ENCODE measurements at regions of chr1 and their contacts with region 1.

Region 1: DNA sequence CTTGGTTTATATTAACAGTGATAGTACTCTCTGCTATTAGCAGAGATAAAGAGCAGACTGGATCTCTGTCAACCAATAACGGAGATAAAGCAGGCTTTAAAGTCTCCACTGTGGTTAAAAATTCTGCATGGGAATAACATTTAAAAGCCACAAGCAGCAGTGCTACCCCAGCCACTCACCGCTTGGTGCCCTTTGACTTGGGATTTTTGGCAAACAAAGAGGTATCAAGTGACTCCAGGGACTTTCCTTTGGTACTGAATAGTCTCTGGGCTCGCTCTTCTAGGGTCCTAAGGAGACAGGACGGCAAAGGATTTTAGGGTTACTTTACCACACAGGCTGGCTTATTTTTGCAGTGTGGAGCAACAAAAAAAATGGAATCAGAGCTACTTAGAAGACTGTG is 11.3 kb downstream of the SF3A3 start:
- DNase-seq: no peak
- ATAC-seq: no peak
- H3K4me3 ChIP-seq: no peak overlapping the region
- H3K27ac ChIP-seq: no peak overlapping the region
- H3K4me1 ChIP-seq: no peaks in the 10 kb centered on the region
- H3K27me3 ChIP-seq: no peaks in the 10 kb centered on the region
- CTCF ChIP-seq: no peak
- EP300 ChIP-seq: no peak
- POLR2A ChIP-seq: no peak
- RAD21 ChIP-seq: no peak

Region 2: DNA sequence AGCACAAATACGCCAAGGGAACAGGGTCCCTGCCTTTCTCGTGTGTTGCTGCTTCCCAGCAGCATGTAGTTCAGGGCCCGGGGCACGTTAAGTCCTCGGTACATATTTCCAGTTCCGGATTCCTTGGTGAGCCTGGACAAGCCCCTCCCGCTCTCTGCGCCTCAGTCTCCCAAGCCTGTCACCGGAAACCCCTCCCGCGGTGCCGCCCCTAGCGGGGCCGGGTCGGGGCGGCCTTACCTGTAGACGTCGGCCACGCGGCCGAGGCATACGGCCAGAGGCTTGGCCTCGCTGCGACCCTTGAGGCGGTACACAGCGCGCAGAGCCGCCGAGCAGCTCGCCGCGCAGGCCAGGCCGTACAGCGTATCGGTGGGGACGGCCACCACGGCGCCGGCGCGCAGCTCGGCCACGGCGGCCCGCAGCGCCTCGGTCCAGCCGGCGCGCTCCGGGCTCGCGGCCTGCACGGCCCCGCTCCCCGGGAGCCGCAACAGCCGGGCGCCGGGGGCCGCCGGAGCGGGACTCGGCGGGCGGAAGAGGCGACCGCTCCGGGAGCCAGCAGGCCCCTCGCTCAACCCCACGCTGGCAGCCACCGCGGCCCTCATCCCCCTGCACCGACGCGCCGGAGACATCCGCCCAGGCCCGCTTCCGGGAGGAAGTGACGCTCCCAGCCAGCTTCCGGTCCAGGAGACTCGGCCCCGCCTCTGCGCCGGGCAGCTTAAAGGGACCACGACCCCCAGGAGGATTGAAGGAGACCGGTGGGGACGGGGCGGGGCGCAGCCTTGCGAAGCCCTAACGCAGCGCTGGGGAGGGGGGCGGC is 170.8 kb before region 1 on chr1 and contains the starts of genes C1orf122 and YRDC:
- CTCF ChIA-PET with region 1: no interaction called
- POLR2A ChIA-PET with region 1: interaction called, 5 read pairs
- in situ Hi-C with region 1: no loop called
- intact Hi-C with region 1: loop called (anchors 10 kb)
- DNase-seq: peak; percentile 96 to 98 (median 96)
- ATAC-seq: peak; percentile 94
- H3K4me3 ChIP-seq: peak within 1 kb of the TSS; percentile 93
- H3K27ac ChIP-seq: peak within 1 kb of the TSS; percentile 78
- H3K4me1 ChIP-seq: peaks cover 18 to 25% of the 10 kb centered on the region in 2 experiments; a peak in 4 of 5 replicates
- H3K27me3 ChIP-seq: no peaks in the 10 kb centered on the region
- CTCF ChIP-seq: no peak
- EP300 ChIP-seq: no peak
- POLR2A ChIP-seq: peak; percentile 82
- RAD21 ChIP-seq: no peak
- polyA plus RNA-seq, gene C1orf122: 3.6 to 5.2 TPM
- polyA plus RNA-seq, gene YRDC: 11.1 to 16.7 TPM